Caco-2 (cell line): ENCODE measurements at regions of chr2 and their contacts with region 1.

Region 1: GRCh38 chr2:160210599-160211138 is 10.6 kb upstream of the ITGB6 start:
- DNase-seq: peak; percentile 74 to 85
- H3K4me3 ChIP-seq: no peak overlapping the region
- H3K4me3 Mint-ChIP-seq: no peak overlapping the region
- H3K27ac Mint-ChIP-seq: no peak overlapping the region
- H3K4me1 ChIP-seq: peaks cover 6% of the 10 kb centered on the region; the same call in 1 of the 2 replicates
- H3K4me1 Mint-ChIP-seq: peaks cover 10% of the 10 kb centered on the region
- H3K27me3 ChIP-seq: no peaks in the 10 kb centered on the region; the same call in 1 of the 2 replicates
- H3K27me3 Mint-ChIP-seq: no peaks in the 10 kb centered on the region
- CTCF ChIP-seq: peak; percentile 84 to 96

Region 2: DNA sequence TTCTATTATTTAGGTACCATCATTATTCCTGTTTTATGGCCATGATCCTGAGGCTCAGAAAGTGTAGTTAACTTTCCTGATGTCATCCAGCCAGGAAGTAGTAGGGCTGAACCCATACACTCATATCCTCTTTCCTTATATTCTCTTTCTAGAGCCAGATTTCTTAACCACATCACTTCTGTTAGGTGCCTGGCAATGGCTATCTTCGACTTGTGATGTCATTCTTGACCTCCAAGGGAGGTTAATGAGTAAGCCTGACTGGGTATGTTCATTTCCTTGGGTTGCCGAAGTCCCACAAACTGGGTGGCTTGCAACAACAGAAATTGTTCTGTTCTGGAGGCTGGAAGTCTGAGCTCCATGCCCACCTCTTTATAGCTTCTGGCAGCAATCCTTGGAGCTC is 54.0 kb before region 1 on chr2:
- CTCF ChIA-PET with region 1: no interaction called
- POLR2A ChIA-PET with region 1: no interaction called
- intact Hi-C with region 1: loop called (anchors 1 kb)
- DNase-seq: no peak
- H3K4me3 ChIP-seq: no peak overlapping the region
- H3K4me3 Mint-ChIP-seq: no peak overlapping the region
- H3K27ac Mint-ChIP-seq: no peak overlapping the region
- H3K4me1 ChIP-seq: no peaks in the 10 kb centered on the region
- H3K4me1 Mint-ChIP-seq: no peaks in the 10 kb centered on the region
- H3K27me3 ChIP-seq: no peaks in the 10 kb centered on the region
- H3K27me3 Mint-ChIP-seq: no peaks in the 10 kb centered on the region
- CTCF ChIP-seq: no peak

Region 3: DNA sequence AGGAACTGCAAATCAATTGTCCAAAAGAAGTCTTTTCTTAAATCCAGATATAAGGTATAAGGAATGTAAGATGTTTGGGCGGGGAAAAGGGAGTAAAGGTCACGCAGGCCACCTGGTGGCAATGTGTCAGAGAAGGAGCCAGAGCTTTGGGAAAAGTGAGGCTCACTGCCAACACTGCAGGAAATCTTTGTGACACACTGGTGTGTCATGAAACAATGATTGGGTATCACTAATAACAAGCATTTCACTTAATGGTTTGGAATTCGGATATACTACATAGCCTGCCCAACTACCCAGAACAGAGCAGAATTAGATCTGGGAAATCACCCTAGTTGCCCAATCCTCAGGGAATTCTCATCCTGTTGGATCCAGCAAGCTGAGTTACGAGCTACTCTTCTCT is 222.0 kb after region 1 on chr2:
- CTCF ChIA-PET with region 1: no interaction called
- POLR2A ChIA-PET with region 1: no interaction called
- intact Hi-C with region 1: no loop called
- DNase-seq: peak in 1 of 2 experiments; percentile 17
- H3K4me3 ChIP-seq: no peak overlapping the region
- H3K4me3 Mint-ChIP-seq: no peak overlapping the region
- H3K27ac Mint-ChIP-seq: no peak overlapping the region
- H3K4me1 ChIP-seq: peaks cover 16% of the 10 kb centered on the region
- H3K4me1 Mint-ChIP-seq: peaks cover 18% of the 10 kb centered on the region
- H3K27me3 ChIP-seq: no peaks in the 10 kb centered on the region
- H3K27me3 Mint-ChIP-seq: no peaks in the 10 kb centered on the region
- CTCF ChIP-seq: peak in 1 of 2 experiments; percentile 9